HCT116 (cell line): ENCODE measurements at regions of chr1 and their contacts with region 1.

Region 1: GRCh38 chr1:15835741-15836510 is 11.6 kb upstream of the SPEN start:
- DNase-seq: peak; percentile 98
- ATAC-seq: peak; percentile 71
- H3K4me3 ChIP-seq: peak overlapping the region; percentile 67 to 78
- H3K27ac ChIP-seq: peak overlapping the region; percentile 99
- H3K4me1 ChIP-seq: peaks cover 17 to 52% of the 10 kb centered on the region in 2 experiments
- H3K27me3 ChIP-seq: no peaks in the 10 kb centered on the region
- CTCF ChIP-seq: no peak
- POLR2A ChIP-seq: peak; percentile 70
- RAD21 ChIP-seq: no peak

Region 2: GRCh38 chr1:15803354-15803753 is 32.6 kb before region 1 on chr1:
- CTCF ChIA-PET with region 1: no interaction called
- POLR2A ChIA-PET with region 1: interaction called, 6 read pairs
- RAD21 ChIA-PET with region 1: no interaction called
- intact Hi-C with region 1: loop called (anchors 2 kb)
- DNase-seq: peak; percentile 58
- ATAC-seq: no peak
- H3K4me3 ChIP-seq: no peak overlapping the region
- H3K27ac ChIP-seq: no peak overlapping the region
- H3K4me1 ChIP-seq: peaks cover 40 to 53% of the 10 kb centered on the region in 2 experiments
- H3K27me3 ChIP-seq: no peaks in the 10 kb centered on the region
- CTCF ChIP-seq: peak in 2 of 3 experiments; percentile 53 to 59; a peak in 4 of 6 replicates
- POLR2A ChIP-seq: no peak
- RAD21 ChIP-seq: no peak

Region 3: DNA sequence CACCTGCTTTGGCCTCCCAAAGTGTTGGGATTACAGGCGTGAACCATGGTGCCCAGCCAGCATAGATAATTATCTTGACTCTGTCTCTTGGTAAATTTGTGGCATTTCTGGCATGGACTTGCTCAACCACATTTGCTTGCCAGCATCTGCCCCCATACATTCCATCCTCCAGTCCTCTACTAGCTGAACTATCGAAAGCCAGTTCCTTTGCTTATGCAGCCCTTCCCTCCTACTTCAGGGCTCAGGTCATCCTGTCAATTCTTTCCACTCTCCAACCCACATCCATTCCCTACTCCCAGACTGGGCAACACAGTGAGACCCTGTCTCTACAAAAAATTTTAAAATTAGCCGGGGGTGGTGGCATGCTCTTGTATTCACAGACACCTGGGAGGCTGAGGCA is 15.4 kb before region 1 on chr1:
- CTCF ChIA-PET with region 1: interaction called, 33 read pairs
- POLR2A ChIA-PET with region 1: interaction called, 13 read pairs
- RAD21 ChIA-PET with region 1: interaction called, 3 to 4 read pairs
- intact Hi-C with region 1: no loop called
- DNase-seq: no peak
- ATAC-seq: peak; percentile 37; the same call in 1 of the 2 replicates
- H3K4me3 ChIP-seq: no peak overlapping the region
- H3K27ac ChIP-seq: no peak overlapping the region
- H3K4me1 ChIP-seq: peaks cover 5 to 11% of the 10 kb centered on the region in 2 experiments; a peak in 3 of 4 replicates
- H3K27me3 ChIP-seq: no peaks in the 10 kb centered on the region
- CTCF ChIP-seq: no peak
- POLR2A ChIP-seq: no peak
- RAD21 ChIP-seq: no peak

Region 4: GRCh38 chr1:15825800-15826199 is 10.1 kb before region 1 on chr1:
- CTCF ChIA-PET with region 1: interaction called, 7 read pairs
- POLR2A ChIA-PET with region 1: interaction called, 13 read pairs
- RAD21 ChIA-PET with region 1: interaction called, 3 to 4 read pairs
- intact Hi-C with region 1: no loop called
- DNase-seq: no peak
- ATAC-seq: no peak
- H3K4me3 ChIP-seq: no peak overlapping the region
- H3K27ac ChIP-seq: no peak overlapping the region
- H3K4me1 ChIP-seq: peaks cover 0 to 7% of the 10 kb centered on the region in 2 experiments; a peak in 2 of 4 replicates
- H3K27me3 ChIP-seq: no peaks in the 10 kb centered on the region
- CTCF ChIP-seq: no peak
- POLR2A ChIP-seq: no peak
- RAD21 ChIP-seq: no peak

Region 5: GRCh38 chr1:15848957-15849774 is 13.2 kb after region 1 on chr1:
- CTCF ChIA-PET with region 1: no interaction called
- POLR2A ChIA-PET with region 1: interaction called, 10 read pairs
- RAD21 ChIA-PET with region 1: interaction called in 1 of 2 experiments, 3 read pairs
- intact Hi-C with region 1: loop called (anchors 1 kb)
- DNase-seq: peak; percentile 69
- ATAC-seq: peak; percentile 44
- H3K4me3 ChIP-seq: peak overlapping the region; percentile 70 to 79
- H3K27ac ChIP-seq: peak overlapping the region; percentile 86
- H3K4me1 ChIP-seq: peaks cover 33 to 48% of the 10 kb centered on the region in 2 experiments
- H3K27me3 ChIP-seq: no peaks in the 10 kb centered on the region
- CTCF ChIP-seq: no peak
- POLR2A ChIP-seq: peak; percentile 31
- RAD21 ChIP-seq: no peak

Region 6: GRCh38 chr1:15895233-15895632 is 59.3 kb after region 1 on chr1:
- CTCF ChIA-PET with region 1: no interaction called
- POLR2A ChIA-PET with region 1: no interaction called
- RAD21 ChIA-PET with region 1: no interaction called
- intact Hi-C with region 1: no loop called
- DNase-seq: no peak
- ATAC-seq: no peak
- H3K4me3 ChIP-seq: no peak overlapping the region
- H3K27ac ChIP-seq: no peak overlapping the region
- H3K4me1 ChIP-seq: peaks cover 4 to 16% of the 10 kb centered on the region in 2 experiments; a peak in 3 of 4 replicates
- H3K27me3 ChIP-seq: no peaks in the 10 kb centered on the region
- CTCF ChIP-seq: no peak
- POLR2A ChIP-seq: no peak
- RAD21 ChIP-seq: no peak